ENCODE measurements at regions of chr2 and their contacts with region 1.

Region 1: DNA sequence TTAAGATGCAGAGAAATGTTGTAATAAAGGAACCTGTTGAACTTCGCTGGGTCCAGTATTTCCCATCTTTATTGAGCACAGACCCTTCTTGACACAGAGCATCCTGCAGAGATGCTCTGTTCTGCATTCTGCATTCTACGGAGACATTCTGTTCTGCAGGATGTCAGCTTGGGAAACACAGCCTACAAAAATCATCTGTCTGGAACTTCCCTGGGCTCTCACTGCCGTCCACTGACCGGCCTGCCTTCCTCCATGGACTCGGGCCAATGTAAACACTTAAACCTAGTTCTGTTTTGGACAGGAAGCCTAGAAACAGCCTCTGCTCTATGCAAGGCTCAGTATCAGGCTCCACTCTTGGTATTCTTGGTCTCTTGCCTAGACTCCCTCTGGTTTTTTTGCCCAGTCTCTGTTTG is 90.0 kb upstream of the PPP1CB start:
- DNase-seq: peak; percentile 81 to 84
- ATAC-seq: peak; percentile 77
- H3K4me3 ChIP-seq: no peak overlapping the region
- H3K27ac ChIP-seq: peak overlapping the region in 1 of 2 donors; percentile 94
- H3K4me1 ChIP-seq: peaks cover 0 to 9% of the 10 kb centered on the region in 2 donors
- H3K27me3 ChIP-seq: no peaks in the 10 kb centered on the region

Region 2: GRCh38 chr2:28594289-28595108 is 67.1 kb before region 1 on chr2:
- intact Hi-C with region 1: loop called (anchors 1 to 5 kb)
- DNase-seq: peak; percentile 92 to 95
- ATAC-seq: peak; percentile 87
- H3K4me3 ChIP-seq: no peak overlapping the region
- H3K27ac ChIP-seq: peak overlapping the region; percentile 72 to 95
- H3K4me1 ChIP-seq: peaks cover 0 to 1% of the 10 kb centered on the region in 2 donors
- H3K27me3 ChIP-seq: no peaks in the 10 kb centered on the region

Region 3: DNA sequence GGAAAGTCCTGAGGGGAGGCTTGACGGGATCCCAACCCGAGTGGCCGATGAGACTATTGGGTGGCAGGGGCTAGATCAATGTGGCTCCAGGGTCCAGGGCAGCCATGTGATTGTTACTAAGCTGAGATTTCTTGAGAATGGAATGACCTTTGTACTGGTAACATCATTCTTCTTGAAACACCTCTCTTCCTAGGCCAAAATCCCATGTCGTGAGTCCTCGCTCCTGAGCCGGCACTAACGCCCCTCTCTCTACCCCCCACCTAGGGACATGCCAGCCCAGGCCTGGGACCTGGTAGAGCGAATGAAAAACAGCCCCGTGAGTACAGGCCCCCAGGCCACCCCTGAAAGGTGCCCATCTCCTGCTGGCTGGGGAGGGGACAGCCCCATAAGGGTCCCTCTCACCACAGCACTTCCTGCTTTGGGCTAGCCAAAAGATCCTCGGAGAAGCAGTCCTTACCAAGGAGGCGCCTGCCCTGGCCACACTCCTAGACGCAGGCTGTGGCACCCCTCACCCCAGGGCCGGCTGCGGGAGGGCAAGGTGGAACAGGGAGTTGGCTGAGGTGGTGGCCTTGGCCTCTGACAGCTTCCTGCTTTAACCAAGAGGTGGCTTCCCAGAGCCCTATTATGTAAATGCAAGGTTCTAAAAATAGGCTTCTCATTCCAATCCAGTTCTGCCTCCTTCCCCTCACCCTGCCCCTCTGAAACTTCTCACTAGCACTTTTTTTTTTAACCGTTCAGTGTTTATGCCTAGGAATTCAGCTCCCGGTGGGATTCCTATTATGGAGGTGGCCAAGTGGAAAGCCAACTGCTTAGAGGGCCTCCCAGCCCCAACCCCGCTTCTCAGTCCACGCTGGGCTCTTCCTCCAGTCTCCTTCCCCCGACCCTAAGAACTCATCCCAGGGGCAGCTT is 36.5 kb before region 1 on chr2:
- intact Hi-C with region 1: loop called (anchors 5 kb)
- DNase-seq: peak; percentile 83 to 87
- ATAC-seq: peak; percentile 70
- H3K4me3 ChIP-seq: no peak overlapping the region
- H3K27ac ChIP-seq: peak overlapping the region; percentile 100
- H3K4me1 ChIP-seq: peaks cover 0 to 8% of the 10 kb centered on the region in 2 donors
- H3K27me3 ChIP-seq: no peaks in the 10 kb centered on the region

Region 4: DNA sequence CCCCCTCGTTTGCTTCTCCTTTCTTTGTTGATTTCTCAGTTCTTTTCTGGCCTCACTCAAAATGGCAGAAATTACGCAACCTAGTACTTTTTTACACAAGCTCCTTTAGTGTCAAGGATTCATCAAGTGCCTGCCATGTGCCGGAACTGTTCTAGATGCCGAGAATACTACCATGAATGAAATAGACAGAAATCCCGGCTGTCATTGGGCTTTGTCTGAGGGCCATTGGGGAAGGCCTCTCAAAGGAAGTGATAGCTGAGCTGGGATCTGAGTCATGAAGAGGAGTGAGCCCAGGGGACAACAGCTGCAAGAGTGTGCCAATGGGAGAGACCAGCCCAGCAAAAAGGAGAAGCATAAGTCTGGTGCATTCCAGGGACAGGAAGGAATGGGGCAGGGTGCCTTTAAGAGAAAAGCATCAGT is 55.8 kb after region 1 on chr2:
- intact Hi-C with region 1: loop called in 1 of 2 experiments (anchors 1 kb)
- DNase-seq: peak in 1 of 2 donors; percentile 87
- ATAC-seq: peak; percentile 58
- H3K4me3 ChIP-seq: no peak overlapping the region
- H3K27ac ChIP-seq: peak overlapping the region; percentile 28 to 64
- H3K4me1 ChIP-seq: peaks cover 2 to 4% of the 10 kb centered on the region in 2 donors
- H3K27me3 ChIP-seq: no peaks in the 10 kb centered on the region

Region 5: DNA sequence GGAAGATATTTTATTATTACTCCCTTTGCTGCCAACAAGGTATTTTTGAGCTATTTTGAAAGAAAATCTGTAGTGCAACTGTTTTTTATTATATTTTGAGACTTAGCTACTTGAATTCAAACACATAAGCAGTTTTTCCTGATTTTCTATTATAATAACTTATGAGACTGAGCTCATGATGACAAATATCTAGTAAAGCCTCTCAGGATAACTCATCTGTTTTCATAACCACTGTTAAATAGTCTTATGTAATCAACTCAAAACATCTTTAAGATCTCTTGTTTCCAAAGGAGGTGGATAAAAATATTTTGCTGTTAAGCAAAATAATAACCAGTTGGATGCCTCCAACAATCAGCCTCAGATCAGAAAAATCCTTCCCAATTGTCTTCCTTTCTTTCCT is 68.1 kb after region 1 on chr2:
- intact Hi-C with region 1: loop called in 1 of 2 experiments (anchors 5 kb)
- DNase-seq: no peak
- ATAC-seq: no peak
- H3K4me3 ChIP-seq: no peak overlapping the region
- H3K27ac ChIP-seq: no peak overlapping the region
- H3K4me1 ChIP-seq: peaks cover 2 to 7% of the 10 kb centered on the region in 2 donors
- H3K27me3 ChIP-seq: no peaks in the 10 kb centered on the region

Region 6: GRCh38 chr2:28736034-28736433 is 74.4 kb after region 1 on chr2:
- intact Hi-C with region 1: loop called (anchors 5 kb)
- DNase-seq: peak; percentile 86 to 89
- ATAC-seq: peak; percentile 94
- H3K4me3 ChIP-seq: peak overlapping the region; percentile 80 to 99
- H3K27ac ChIP-seq: peak overlapping the region; percentile 90 to 93
- H3K4me1 ChIP-seq: peaks cover 0 to 7% of the 10 kb centered on the region in 2 donors
- H3K27me3 ChIP-seq: no peaks in the 10 kb centered on the region

Region 7: GRCh38 chr2:28751252-28751955 is 89.8 kb after region 1 on chr2 and contains the start of gene PPP1CB:
- intact Hi-C with region 1: loop called (anchors 2 to 5 kb)
- DNase-seq: peak; percentile 98 to 99
- ATAC-seq: peak; percentile 96
- H3K4me3 ChIP-seq: peak within 1 kb of the TSS; percentile 87 to 94
- H3K27ac ChIP-seq: peak within 1 kb of the TSS; percentile 99
- H3K4me1 ChIP-seq: peaks cover 0 to 6% of the 10 kb centered on the region in 2 donors
- H3K27me3 ChIP-seq: no peaks in the 10 kb centered on the region
- total RNA-seq, gene PPP1CB: 386 to 484 TPM

Region 8: DNA sequence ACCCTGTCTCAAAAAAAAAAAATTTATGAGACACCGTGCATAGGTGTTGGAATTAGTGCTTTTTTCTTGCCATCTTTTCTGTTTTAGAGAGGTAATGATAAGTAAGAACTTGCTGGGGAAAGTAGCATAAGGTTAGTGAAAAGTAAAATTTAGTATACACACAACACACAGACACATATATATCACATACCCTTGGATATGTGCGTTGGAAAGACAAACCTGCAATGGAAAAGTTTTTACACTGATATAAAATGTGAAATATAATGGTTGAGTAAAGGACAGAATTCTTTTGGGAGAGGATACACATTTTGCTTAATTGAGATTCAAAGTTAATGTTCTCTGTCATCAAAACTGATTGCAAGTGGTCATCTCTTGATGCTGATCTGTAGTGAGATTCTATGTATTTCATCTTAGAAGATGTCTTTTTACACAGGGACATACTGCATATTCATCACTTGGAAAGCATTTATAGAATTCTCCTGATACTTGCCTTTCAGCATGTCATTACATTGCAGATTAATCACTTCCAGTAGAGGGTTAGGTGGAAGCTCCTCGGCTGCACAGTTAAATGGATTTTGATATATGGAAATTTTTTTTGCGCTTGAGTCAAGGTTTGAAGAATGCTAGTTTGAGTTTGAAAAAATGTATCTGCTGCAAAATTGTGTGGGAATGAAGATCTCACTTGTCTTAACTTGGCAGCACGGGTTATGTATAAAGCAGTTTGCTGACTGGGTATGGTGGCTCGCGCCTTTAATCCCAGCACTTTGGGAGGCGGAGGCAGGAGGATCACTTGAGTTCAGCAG is 103.5 kb after region 1 on chr2:
- intact Hi-C with region 1: no loop called
- DNase-seq: no peak
- ATAC-seq: no peak
- H3K4me3 ChIP-seq: no peak overlapping the region
- H3K27ac ChIP-seq: no peak overlapping the region
- H3K4me1 ChIP-seq: peaks cover 2 to 8% of the 10 kb centered on the region in 2 donors
- H3K27me3 ChIP-seq: no peaks in the 10 kb centered on the region